ENCODE measurements at regions of chr13 and their contacts with region 1.

Region 1: DNA sequence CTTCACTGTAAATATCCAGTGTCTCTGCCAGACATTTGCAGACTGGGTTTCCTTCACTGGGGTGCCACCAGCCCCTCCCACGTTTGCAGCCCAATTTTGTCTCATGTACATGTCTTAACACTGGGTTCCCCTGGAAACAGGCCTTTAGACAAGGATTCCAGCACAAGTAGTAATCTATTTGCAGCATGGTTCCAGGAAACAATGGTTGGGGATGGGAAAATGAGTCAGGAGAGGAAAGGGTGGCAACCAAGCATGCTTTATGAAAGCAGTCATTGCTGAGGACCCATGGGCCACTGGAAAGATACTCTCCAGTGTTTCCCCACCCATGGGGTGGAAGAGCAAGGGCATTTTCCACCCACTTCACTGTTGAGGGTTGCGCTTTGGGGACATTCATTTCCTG is 53.6 kb upstream of the FARP1 start:
- DNase-seq: no peak
- H3K4me3 ChIP-seq: no peak overlapping the region
- H3K27ac ChIP-seq: no peak overlapping the region
- H3K4me1 ChIP-seq: no peaks in the 10 kb centered on the region
- H3K27me3 ChIP-seq: no peaks in the 10 kb centered on the region
- CTCF ChIP-seq: no peak

Region 2: GRCh38 chr13:98111168-98112098 is 22.2 kb after region 1 on chr13:
- intact Hi-C with region 1: loop called (anchors 2 kb)
- DNase-seq: no peak
- H3K4me3 ChIP-seq: no peak overlapping the region
- H3K27ac ChIP-seq: no peak overlapping the region
- H3K4me1 ChIP-seq: no peaks in the 10 kb centered on the region
- H3K27me3 ChIP-seq: no peaks in the 10 kb centered on the region
- CTCF ChIP-seq: no peak

Measured in left ventricle myocardium inferior (tissue), 1 donor.